Kidney (tissue), 22 donors: ENCODE measurements at regions of chr14 and their contacts with region 1.

Region 1: DNA sequence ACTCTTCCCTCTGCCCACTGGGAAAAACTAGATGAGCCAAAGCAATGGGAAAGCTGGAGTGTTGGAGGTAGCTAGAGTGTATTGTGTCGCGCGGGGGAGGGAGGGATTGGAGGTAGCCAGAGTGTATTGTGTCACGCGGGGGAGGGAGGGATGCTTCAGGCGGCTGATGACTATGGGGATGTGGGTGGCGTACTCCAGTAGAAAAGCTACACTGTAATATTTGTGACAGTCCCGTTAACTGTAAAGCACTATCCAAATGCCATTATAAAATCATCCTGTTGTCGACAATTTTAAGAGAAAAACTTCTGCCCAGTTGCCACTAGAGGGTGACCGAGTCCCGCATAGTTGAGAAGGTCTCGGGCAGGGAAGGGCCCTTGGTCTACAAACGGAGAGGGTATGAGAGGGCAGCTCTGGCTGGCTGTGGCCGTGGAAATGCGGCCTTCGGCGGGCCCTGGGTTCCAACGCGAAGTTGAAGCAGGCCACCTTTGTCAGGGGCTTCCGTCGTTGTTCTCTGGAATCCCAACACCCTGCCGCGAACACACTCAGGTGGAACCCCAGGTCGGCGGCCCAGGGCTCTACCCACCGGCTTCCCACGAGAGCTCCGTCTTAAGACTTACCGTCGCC is 15.1 kb upstream of the PLEK2 start:
- DNase-seq: peak; percentile 87 to 93 (median 88)
- H3K4me3 ChIP-seq: no peak overlapping the region
- H3K27ac ChIP-seq: no peak overlapping the region
- H3K4me1 ChIP-seq: peaks cover 0 to 3% (median 0%) of the 10 kb centered on the region in 3 donors
- H3K27me3 ChIP-seq: no peaks in the 10 kb centered on the region
- CTCF ChIP-seq: peak; percentile 80

Region 2: GRCh38 chr14:67566908-67567307 is 139.8 kb after region 1 on chr14:
- intact Hi-C with region 1: loop called (anchors 5 kb)
- DNase-seq: no peak
- H3K4me3 ChIP-seq: no peak overlapping the region
- H3K27ac ChIP-seq: no peak overlapping the region
- H3K4me1 ChIP-seq: no peaks in the 10 kb centered on the region
- H3K27me3 ChIP-seq: no peaks in the 10 kb centered on the region
- CTCF ChIP-seq: no peak

Region 3: DNA sequence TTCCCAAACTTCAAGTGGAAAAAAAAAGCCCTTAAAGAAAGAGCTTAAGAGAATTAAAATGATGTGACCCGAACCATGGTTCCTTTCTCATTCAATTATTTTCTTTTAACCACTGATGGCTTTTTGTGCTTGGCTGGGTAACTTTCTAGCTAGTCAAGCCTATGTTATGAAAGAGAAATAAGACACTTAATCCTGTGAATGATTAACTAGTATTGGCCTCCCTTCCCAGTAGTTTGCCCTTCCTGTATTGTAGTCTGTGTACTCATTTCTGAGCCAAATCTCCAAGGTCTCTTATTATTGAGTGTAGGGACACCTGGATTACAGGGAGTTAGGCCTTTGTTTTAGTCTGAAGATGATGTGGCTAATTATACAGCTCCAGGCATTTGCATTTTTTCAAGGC is 745.5 kb after region 1 on chr14:
- intact Hi-C with region 1: no loop called
- DNase-seq: peak in 2 of 5 donors; percentile 88 to 91
- H3K4me3 ChIP-seq: no peak overlapping the region
- H3K27ac ChIP-seq: peak overlapping the region; percentile 72 to 82
- H3K4me1 ChIP-seq: peaks cover 9 to 17% (median 16%) of the 10 kb centered on the region in 3 donors
- H3K27me3 ChIP-seq: no peaks in the 10 kb centered on the region
- CTCF ChIP-seq: no peak